ENCODE measurements at regions of chr6 and their contacts with region 1.

Region 1: GRCh38 chr6:26065952-26066380 is 21.3 kb upstream of the HFE start:
- DNase-seq: peak; percentile 65 to 79
- H3K4me3 ChIP-seq: no peak overlapping the region
- H3K27ac ChIP-seq: peak overlapping the region; percentile 69
- H3K4me1 ChIP-seq: peaks cover 36% of the 10 kb centered on the region
- H3K27me3 ChIP-seq: no peaks in the 10 kb centered on the region
- CTCF ChIP-seq: peak; percentile 88

Region 2: GRCh38 chr6:26087284-26088115 is 21.5 kb after region 1 on chr6 and contains the start of gene HFE:
- CTCF ChIA-PET with region 1: interaction called, 3 read pairs
- POLR2A ChIA-PET with region 1: interaction called, 3 read pairs
- intact Hi-C with region 1: loop called (anchors 1 kb)
- DNase-seq: peak; percentile 56
- H3K4me3 ChIP-seq: peak within 1 kb of the TSS; percentile 78
- H3K27ac ChIP-seq: peak within 1 kb of the TSS; percentile 72
- H3K4me1 ChIP-seq: peaks cover 27% of the 10 kb centered on the region
- H3K27me3 ChIP-seq: no peaks in the 10 kb centered on the region
- CTCF ChIP-seq: no peak
- total RNA-seq, gene HFE: 33.3 and 46.0 TPM in 2 replicates

Region 3: GRCh38 chr6:26097268-26097875 is 31.4 kb after region 1 on chr6:
- CTCF ChIA-PET with region 1: interaction called, 6 read pairs
- POLR2A ChIA-PET with region 1: interaction called, 5 read pairs
- intact Hi-C with region 1: loop called (anchors 1 kb)
- DNase-seq: peak; percentile 53 to 61
- H3K4me3 ChIP-seq: no peak overlapping the region
- H3K27ac ChIP-seq: no peak overlapping the region
- H3K4me1 ChIP-seq: peaks cover 6% of the 10 kb centered on the region
- H3K27me3 ChIP-seq: no peaks in the 10 kb centered on the region
- CTCF ChIP-seq: peak; percentile 89

Measured in PC-9 (cell line).